Endothelial cell of umbilical vein (primary cell): ENCODE measurements at regions of chr19 and their contacts with region 1.

Region 1: GRCh38 chr19:6110360-6110977 is at the start of gene RFX2:
- DNase-seq: peak; percentile 99
- H3K4me3 ChIP-seq: peak within 1 kb of the TSS; percentile 78 to 96 (median 80)
- H3K27ac ChIP-seq: peak within 1 kb of the TSS; percentile 86
- H3K4me1 ChIP-seq: peaks cover 12% of the 10 kb centered on the region
- H3K27me3 ChIP-seq: no peaks in the 10 kb centered on the region
- CTCF ChIP-seq: no peak
- POLR2A ChIP-seq: peak; percentile 52
- total RNA-seq, gene RFX2: 16.1 and 16.2 TPM in 2 replicates

Region 2: GRCh38 chr19:6066661-6067646 is 43.5 kb before region 1 on chr19:
- CTCF ChIA-PET with region 1: interaction called, 13 read pairs
- POLR2A ChIA-PET with region 1: interaction called, 5 read pairs
- dilution Hi-C with region 1: no loop called
- intact Hi-C with region 1: loop called (anchors 1 kb)
- DNase-seq: peak; percentile 99
- H3K4me3 ChIP-seq: no peak overlapping the region
- H3K27ac ChIP-seq: peak overlapping the region; percentile 100
- H3K4me1 ChIP-seq: peaks cover 54% of the 10 kb centered on the region
- H3K27me3 ChIP-seq: no peaks in the 10 kb centered on the region
- CTCF ChIP-seq: no peak
- POLR2A ChIP-seq: no peak

Region 3: DNA sequence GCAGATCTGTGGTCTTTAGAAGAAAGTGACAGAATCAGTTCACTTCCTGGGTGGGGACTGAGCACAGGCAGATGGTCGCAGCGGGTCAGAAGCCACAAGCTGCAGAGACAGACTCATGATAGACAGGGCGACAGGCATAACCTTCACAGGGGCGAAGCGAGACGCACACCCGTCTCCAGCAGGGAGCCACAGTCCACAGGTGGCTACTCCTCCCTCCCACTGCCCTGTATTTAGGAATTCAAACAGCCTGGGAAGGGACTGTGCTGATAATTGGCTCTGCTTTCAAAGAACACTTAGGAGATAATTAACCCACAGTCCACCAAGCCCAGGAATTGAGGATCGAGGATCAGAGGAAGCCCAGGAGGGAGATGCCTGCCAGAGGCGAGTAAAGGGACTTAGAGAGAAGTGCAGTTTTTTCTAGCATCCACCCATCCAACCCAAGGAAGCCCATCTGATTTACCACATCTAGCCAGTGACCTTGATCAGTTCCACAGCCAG is 23.3 kb before region 1 on chr19:
- CTCF ChIA-PET with region 1: interaction called, 5 read pairs
- POLR2A ChIA-PET with region 1: no interaction called
- dilution Hi-C with region 1: no loop called
- intact Hi-C with region 1: loop called (anchors 1 kb)
- DNase-seq: no peak
- H3K4me3 ChIP-seq: no peak overlapping the region
- H3K27ac ChIP-seq: peak overlapping the region; percentile 78
- H3K4me1 ChIP-seq: peaks cover 43% of the 10 kb centered on the region
- H3K27me3 ChIP-seq: no peaks in the 10 kb centered on the region
- CTCF ChIP-seq: no peak
- POLR2A ChIP-seq: no peak

Region 4: GRCh38 chr19:6233827-6234511 is 123.5 kb after region 1 on chr19:
- CTCF ChIA-PET with region 1: no interaction called
- POLR2A ChIA-PET with region 1: no interaction called
- dilution Hi-C with region 1: no loop called
- intact Hi-C with region 1: no loop called
- DNase-seq: peak; percentile 28
- H3K4me3 ChIP-seq: no peak overlapping the region
- H3K27ac ChIP-seq: peak overlapping the region; percentile 40
- H3K4me1 ChIP-seq: peaks cover 39% of the 10 kb centered on the region
- H3K27me3 ChIP-seq: no peaks in the 10 kb centered on the region
- CTCF ChIP-seq: no peak
- POLR2A ChIP-seq: no peak